PC-3 (cell line): ENCODE measurements at regions of chr10 and their contacts with region 1.

Region 1: GRCh38 chr10:101840741-101841453 is 2.7 kb downstream of the KCNIP2 start:
- DNase-seq: peak; percentile 85
- ATAC-seq: peak; percentile 88
- H3K4me3 ChIP-seq: peak overlapping the region; percentile 65
- H3K27ac ChIP-seq: no peak overlapping the region
- H3K4me1 ChIP-seq: peaks cover 7% of the 10 kb centered on the region; the same call in 1 of the 2 replicates
- H3K27me3 ChIP-seq: no peaks in the 10 kb centered on the region
- CTCF ChIP-seq: peak; percentile 92

Region 2: DNA sequence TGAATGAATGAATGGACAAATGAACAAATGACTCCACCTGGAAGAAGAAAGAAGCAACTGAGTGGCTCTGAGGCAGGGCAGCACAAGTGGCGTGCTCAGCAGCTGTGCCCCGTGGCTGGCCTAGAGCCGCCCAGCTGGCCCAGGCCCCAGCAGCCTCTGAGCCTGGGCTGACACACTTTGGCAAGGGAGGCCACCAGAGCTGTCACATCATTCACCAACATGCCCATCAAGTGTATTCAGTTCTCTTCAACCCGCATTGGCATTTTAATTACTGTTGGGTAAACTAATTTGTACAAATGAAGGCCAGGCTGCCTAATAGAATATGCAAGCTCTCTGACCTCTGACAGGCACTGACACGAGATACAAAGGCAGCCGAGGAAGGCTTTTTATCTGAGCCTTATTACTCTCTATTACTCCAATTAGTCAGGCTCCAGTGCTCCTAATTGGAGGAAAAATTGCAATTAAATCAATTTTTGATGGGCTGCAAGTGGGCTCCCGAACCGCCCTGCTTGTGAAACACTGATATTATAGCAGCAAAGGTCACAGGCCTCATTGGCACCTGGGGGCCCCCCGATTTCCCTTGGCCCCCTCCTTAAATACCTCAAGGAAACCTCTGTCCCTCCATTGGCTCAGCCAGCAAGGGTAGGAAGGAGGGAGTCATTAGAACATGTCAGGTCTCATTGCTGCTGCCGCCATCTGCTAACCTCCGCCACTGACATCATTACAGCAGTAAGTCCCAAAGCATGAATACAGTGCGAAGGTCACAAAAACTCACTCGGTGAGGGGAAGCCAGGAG is 210.9 kb before region 1 on chr10:
- CTCF ChIA-PET with region 1: no interaction called
- POLR2A ChIA-PET with region 1: no interaction called
- intact Hi-C with region 1: no loop called
- DNase-seq: no peak
- ATAC-seq: no peak
- H3K4me3 ChIP-seq: no peak overlapping the region
- H3K27ac ChIP-seq: no peak overlapping the region
- H3K4me1 ChIP-seq: no peaks in the 10 kb centered on the region
- H3K27me3 ChIP-seq: no peaks in the 10 kb centered on the region
- CTCF ChIP-seq: no peak

Region 3: GRCh38 chr10:101879456-101880231 is 38.7 kb after region 1 on chr10:
- CTCF ChIA-PET with region 1: interaction called, 11 read pairs
- POLR2A ChIA-PET with region 1: no interaction called
- intact Hi-C with region 1: loop called (anchors 1 kb)
- DNase-seq: peak; percentile 89
- ATAC-seq: peak; percentile 87
- H3K4me3 ChIP-seq: no peak overlapping the region
- H3K27ac ChIP-seq: peak overlapping the region; percentile 95
- H3K4me1 ChIP-seq: peaks cover 26% of the 10 kb centered on the region
- H3K27me3 ChIP-seq: no peaks in the 10 kb centered on the region
- CTCF ChIP-seq: no peak

Region 4: GRCh38 chr10:101889256-101890210 is 48.6 kb after region 1 on chr10:
- CTCF ChIA-PET with region 1: interaction called, 13 read pairs
- POLR2A ChIA-PET with region 1: no interaction called
- intact Hi-C with region 1: loop called (anchors 2 kb)
- DNase-seq: peak; percentile 76
- ATAC-seq: peak; percentile 83
- H3K4me3 ChIP-seq: no peak overlapping the region
- H3K27ac ChIP-seq: no peak overlapping the region
- H3K4me1 ChIP-seq: no peaks in the 10 kb centered on the region
- H3K27me3 ChIP-seq: no peaks in the 10 kb centered on the region
- CTCF ChIP-seq: peak; percentile 87

Region 5: GRCh38 chr10:102003541-102003940 is 162.6 kb after region 1 on chr10:
- CTCF ChIA-PET with region 1: interaction called, 13 read pairs
- POLR2A ChIA-PET with region 1: no interaction called
- intact Hi-C with region 1: no loop called
- DNase-seq: no peak
- ATAC-seq: no peak; the same call in 1 of the 2 replicates
- H3K4me3 ChIP-seq: no peak overlapping the region
- H3K27ac ChIP-seq: no peak overlapping the region
- H3K4me1 ChIP-seq: no peaks in the 10 kb centered on the region
- H3K27me3 ChIP-seq: no peaks in the 10 kb centered on the region
- CTCF ChIP-seq: no peak

Region 6: DNA sequence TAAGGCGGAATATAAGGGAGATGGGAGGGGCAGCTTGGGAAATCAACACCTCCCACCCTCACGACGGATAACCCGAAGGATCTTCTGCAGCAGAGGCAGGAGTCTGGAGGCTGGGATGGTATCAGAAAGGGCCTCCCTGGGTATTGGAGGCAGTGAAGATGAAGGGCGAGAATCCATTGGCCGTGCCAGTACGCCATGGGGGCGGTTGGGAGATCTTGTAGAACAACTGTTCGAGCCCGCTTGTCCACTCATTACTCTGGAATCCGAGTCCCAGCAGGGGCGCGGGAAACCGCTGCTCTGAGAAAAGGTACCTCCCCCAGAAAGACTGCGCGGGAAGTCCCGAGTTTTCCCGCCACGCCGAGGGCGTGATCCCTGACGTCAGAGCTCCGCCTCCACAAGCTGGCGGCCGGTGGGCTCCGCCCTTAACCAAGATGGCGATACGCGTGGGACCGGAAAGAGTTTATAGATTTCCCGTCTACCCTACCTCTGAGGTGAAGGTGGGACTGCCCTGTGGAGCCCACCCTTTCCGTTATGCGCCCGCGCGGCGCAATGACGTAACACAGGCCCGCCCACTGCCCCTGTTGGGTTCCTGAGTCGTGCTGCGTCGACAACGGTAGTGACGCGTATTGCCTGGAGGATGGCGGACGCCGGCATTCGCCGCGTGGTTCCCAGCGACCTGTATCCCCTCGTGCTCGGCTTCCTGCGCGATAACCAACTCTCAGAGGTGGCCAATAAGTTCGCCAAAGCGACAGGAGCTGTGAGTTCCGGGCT is 311.1 kb after region 1 on chr10 and contains the start of gene NOLC1:
- CTCF ChIA-PET with region 1: no interaction called
- POLR2A ChIA-PET with region 1: no interaction called
- intact Hi-C with region 1: no loop called
- DNase-seq: peak; percentile 97
- ATAC-seq: peak; percentile 83
- H3K4me3 ChIP-seq: peak within 1 kb of the TSS; percentile 99
- H3K27ac ChIP-seq: peak within 1 kb of the TSS; percentile 95
- H3K4me1 ChIP-seq: peaks cover 23% of the 10 kb centered on the region
- H3K27me3 ChIP-seq: no peaks in the 10 kb centered on the region
- CTCF ChIP-seq: no peak
- total RNA-seq, gene NOLC1: 69.9 TPM in 2 replicates

Region 7: DNA sequence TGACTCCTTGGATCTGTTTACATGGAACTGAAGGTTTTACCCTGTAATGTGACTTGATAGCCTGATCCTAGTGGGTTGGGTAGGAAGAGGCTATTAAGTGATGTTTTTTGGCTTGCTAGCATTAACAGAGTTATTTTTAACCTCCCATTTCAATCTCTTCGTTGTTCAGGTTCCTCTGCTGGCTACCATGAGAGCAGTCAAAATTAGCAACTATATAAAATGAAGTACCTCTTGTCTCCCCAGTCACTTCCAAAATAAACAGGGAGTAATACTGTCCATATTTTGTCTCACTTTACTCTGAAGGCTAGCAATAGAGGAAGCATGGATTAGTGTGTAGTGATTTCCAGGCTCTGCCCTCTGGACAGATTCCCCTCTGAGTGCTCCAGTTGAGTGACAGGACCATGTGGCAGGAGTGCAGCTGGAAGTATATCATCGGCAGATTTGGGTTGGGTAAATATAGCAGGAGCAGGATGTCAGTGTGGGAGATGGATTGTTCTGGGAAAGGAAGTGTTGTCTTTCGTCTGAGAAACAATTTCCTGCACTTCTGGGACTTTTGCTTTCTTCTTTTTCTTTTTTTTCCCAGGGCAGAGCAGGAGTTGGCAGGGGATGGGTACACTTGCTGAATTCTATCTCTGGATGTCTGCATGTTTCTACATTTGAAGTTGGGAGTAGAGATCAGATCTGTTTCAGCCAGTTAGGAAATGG is 439.7 kb after region 1 on chr10:
- CTCF ChIA-PET with region 1: no interaction called
- POLR2A ChIA-PET with region 1: no interaction called
- intact Hi-C with region 1: no loop called
- DNase-seq: no peak
- ATAC-seq: no peak
- H3K4me3 ChIP-seq: no peak overlapping the region
- H3K27ac ChIP-seq: no peak overlapping the region
- H3K4me1 ChIP-seq: no peaks in the 10 kb centered on the region
- H3K27me3 ChIP-seq: no peaks in the 10 kb centered on the region
- CTCF ChIP-seq: no peak